ENCODE measurements at regions of chr12 and their contacts with region 1.

Region 1: GRCh38 chr12:101759396-101760047 is 20.3 kb upstream of the SYCP3 start:
- DNase-seq: no peak
- H3K4me3 Mint-ChIP-seq: no peak overlapping the region
- H3K27ac Mint-ChIP-seq: no peak overlapping the region
- H3K4me1 Mint-ChIP-seq: no peaks in the 10 kb centered on the region
- H3K27me3 Mint-ChIP-seq: no peaks in the 10 kb centered on the region

Region 2: DNA sequence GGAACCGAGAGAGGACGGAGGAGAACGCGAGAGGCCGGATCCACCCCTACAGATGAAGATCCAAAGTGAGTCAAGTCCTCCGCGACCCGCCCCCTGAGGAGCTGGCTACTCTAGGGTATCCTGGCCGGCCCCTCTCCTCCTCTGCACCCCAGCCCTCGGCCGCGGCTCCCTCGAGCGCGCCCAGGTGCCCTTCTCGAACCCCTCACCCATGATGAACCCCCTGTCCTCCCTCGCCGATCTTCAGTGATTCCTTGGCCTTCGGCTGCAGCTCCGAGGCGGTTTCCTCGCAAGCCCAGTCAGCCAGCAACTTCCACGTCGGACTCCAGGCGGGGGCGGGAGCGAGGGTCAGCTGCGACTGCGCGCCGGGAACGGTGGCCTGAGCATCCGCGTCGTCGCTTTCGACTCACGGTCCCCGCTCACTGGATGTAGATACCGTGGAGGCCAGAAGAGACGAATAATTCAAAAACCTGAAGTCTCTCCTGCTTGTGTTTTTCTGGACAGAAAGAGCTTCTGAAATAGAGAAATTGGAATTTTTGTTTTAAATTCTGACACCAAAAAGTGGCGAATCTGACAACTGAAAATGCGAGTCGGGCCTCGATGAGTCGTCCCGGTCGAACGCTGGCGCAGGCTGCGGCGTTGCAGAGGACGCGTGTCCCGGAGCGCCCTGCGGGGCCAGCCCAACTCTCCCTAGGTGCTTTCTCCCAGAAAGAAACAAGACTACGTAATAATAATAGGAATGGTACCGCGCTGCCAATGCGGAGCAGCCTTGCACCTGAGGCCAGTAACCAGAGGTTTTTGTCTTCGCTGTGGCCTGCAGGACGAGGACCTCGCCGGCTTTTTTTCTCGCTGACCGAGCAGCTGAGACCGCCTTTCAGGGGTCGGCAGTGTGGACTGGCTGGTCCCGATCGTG is 351.8 kb before region 1 on chr12 and contains the start of gene ARL1:
- CTCF ChIA-PET with region 1: interaction called, 3 read pairs
- intact Hi-C with region 1: loop called (anchors 2 kb)
- DNase-seq: peak; percentile 84
- H3K4me3 Mint-ChIP-seq: peak within 1 kb of the TSS; percentile 93
- H3K27ac Mint-ChIP-seq: peak within 1 kb of the TSS; percentile 90
- H3K4me1 Mint-ChIP-seq: peaks cover 19% of the 10 kb centered on the region
- H3K27me3 Mint-ChIP-seq: peaks cover 6% of the 10 kb centered on the region
- total RNA-seq, gene ARL1: 44.1 to 48.4 TPM

Region 3: DNA sequence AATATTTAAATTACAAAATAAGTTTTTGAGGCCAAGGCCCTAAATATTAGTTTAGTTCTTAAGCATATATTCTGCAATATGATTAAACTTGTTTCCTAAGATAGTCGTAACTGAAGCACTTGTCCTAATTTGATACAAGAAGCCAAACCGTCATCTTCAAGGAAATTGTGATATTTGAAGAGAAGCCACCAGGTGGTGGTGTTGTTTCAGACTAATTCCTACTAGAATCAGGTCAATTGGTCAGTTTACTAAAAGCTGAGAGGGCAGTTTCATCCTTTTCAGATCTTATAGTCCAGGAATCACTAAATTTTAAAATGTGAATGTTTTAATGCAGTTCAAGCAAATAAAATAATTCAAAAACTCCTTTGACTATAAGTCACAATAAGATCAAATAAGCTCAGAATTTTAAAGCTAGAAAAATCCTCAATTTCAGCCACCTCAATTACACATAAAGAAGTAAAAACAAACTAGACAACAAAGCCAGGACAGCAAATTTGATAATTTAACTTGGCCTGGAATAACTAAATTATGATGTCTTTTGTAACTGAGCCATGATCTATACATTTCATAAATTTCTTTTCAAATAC is 344.9 kb before region 1 on chr12:
- CTCF ChIA-PET with region 1: interaction called, 10 read pairs
- intact Hi-C with region 1: loop called (anchors 1 kb)
- DNase-seq: peak; percentile 25
- H3K4me3 Mint-ChIP-seq: no peak overlapping the region
- H3K27ac Mint-ChIP-seq: no peak overlapping the region
- H3K4me1 Mint-ChIP-seq: no peaks in the 10 kb centered on the region
- H3K27me3 Mint-ChIP-seq: peaks cover 9% of the 10 kb centered on the region

Region 4: DNA sequence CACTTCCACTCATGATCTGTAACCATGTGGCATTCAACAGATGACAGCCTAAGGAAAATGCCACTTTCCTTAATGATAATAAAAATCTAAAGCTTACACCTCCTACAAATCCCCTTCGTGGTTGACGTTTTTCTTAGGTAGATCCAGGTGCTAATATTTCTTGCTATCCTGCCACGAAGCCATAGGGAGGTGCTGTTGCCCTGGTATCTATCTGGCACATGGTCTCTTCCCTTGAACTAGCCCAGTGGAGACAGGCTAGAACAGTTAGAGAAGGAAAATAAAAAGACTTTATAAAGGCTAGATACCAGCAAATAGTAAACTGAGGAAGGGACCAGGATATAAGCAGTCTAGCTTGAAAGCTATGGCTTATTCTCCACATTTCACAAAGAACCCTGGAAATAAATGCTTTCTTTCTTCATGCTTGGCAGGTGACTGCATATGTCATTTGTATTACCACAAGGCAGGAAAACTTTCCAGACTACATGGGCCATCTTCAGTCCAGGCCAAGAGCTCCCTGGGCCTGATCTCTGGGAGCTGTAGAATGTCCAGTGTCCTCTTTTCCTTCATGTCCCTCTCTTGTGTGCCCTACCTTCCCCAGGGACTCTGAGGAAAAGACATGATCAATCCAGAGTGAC is 269.1 kb before region 1 on chr12:
- CTCF ChIA-PET with region 1: no interaction called
- intact Hi-C with region 1: loop called (anchors 1 kb)
- DNase-seq: peak; percentile 48
- H3K4me3 Mint-ChIP-seq: no peak overlapping the region
- H3K27ac Mint-ChIP-seq: no peak overlapping the region
- H3K4me1 Mint-ChIP-seq: no peaks in the 10 kb centered on the region
- H3K27me3 Mint-ChIP-seq: peaks cover 1% of the 10 kb centered on the region

Region 5: GRCh38 chr12:101570047-101570446 is 189.5 kb before region 1 on chr12:
- CTCF ChIA-PET with region 1: no interaction called
- intact Hi-C with region 1: loop called (anchors 1 kb)
- DNase-seq: no peak
- H3K4me3 Mint-ChIP-seq: no peak overlapping the region
- H3K27ac Mint-ChIP-seq: no peak overlapping the region
- H3K4me1 Mint-ChIP-seq: peaks cover 19% of the 10 kb centered on the region
- H3K27me3 Mint-ChIP-seq: peaks cover 5% of the 10 kb centered on the region

Region 6: DNA sequence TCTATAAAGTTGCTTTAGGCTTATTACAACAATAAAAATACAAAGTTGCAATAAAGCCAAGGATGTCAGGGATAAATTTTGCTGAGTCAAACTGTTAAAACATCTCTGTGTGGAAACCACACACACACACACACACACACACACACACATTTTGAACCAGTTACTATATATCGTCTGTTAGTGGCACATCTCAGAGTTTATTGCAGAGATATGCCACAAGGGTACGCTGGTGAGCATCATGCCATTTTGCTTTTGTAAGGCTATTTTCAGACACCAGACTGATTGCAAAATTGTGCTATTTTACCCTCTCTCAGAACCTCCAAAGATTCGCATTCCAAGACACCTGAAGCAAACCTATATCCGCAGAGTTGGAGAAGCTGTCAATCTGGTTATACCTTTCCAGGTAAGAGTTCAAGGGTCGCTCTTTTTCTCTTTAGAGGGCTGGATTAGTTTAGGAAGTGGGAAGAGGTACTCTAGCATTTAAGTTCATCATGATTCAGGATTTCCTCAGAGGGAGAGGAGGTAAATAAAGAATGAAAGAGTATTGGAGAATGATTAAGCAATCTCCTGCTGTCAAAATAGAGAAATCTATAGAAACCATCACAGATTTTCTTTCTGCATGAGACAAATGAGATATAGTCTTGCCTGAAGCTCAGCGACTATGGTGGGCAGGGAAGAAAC is 89.4 kb before region 1 on chr12:
- CTCF ChIA-PET with region 1: interaction called, 3 read pairs
- intact Hi-C with region 1: loop called (anchors 1 kb)
- DNase-seq: peak; percentile 70
- H3K4me3 Mint-ChIP-seq: no peak overlapping the region
- H3K27ac Mint-ChIP-seq: no peak overlapping the region
- H3K4me1 Mint-ChIP-seq: peaks cover 22% of the 10 kb centered on the region
- H3K27me3 Mint-ChIP-seq: peaks cover 2% of the 10 kb centered on the region

Region 7: GRCh38 chr12:101813117-101813516 is 53.6 kb after region 1 on chr12:
- CTCF ChIA-PET with region 1: no interaction called
- intact Hi-C with region 1: no loop called
- DNase-seq: no peak
- H3K4me3 Mint-ChIP-seq: no peak overlapping the region
- H3K27ac Mint-ChIP-seq: no peak overlapping the region
- H3K4me1 Mint-ChIP-seq: peaks cover 30% of the 10 kb centered on the region
- H3K27me3 Mint-ChIP-seq: no peaks in the 10 kb centered on the region